Spleen (tissue), 13 donors: ENCODE measurements at regions of chr20 and their contacts with region 1.

Region 1: DNA sequence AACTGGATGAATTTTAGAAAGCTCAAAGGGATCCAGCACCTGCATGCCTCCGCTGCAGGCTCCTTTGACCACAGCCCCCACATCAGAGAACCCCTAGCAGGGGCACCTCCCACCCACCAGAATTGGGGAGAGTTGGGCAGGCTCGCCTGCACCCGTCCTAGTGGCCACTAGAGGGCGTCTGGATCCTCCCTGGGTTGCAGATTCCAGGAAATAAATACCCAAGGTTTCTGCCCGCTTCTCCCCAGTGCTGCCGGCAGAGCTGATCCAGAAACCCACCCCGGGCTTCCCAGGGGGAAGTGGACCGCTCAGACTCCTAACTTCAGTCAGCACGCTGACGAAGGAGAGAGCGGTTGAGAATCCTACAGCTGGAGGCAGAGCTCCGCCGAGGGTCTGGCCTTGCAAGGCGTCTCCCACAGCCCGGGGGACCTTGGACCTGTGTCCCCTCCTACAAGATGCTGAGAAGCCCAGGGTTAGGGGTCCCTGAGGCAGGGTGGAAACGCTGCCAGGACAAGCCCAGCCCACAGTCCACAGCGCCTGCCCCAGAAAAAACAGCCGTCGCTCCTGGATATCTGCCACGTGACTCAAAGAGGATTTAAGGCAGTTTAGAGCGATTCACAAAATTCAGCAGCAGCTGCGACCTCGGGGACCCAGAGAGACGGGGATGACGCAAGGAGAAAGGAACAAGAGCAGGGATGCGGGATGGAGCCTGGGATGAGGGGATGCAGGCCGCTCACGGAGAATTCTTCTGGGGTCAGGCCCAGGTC is 32.6 kb upstream of the PHACTR3 start:
- DNase-seq: peak; percentile 86
- H3K4me3 ChIP-seq: peak overlapping the region in 7 of 8 donors; percentile 1 to 68 (median 27)
- H3K27ac ChIP-seq: peak overlapping the region in 7 of 8 donors; percentile 36 to 78 (median 72)
- H3K4me1 ChIP-seq: peaks cover 0 to 22% (median 12%) of the 10 kb centered on the region in 6 donors
- H3K27me3 ChIP-seq: peaks cover 0 to 63% (median 12%) of the 10 kb centered on the region in 7 donors
- CTCF ChIP-seq: peak; percentile 40 to 93 (median 92)
- POLR2A ChIP-seq: no peak

Region 2: GRCh38 chr20:59455402-59456341 is 116.1 kb before region 1 on chr20:
- intact Hi-C with region 1: no loop called
- DNase-seq: peak; percentile 47
- H3K4me3 ChIP-seq: no peak overlapping the region
- H3K27ac ChIP-seq: no peak overlapping the region
- H3K4me1 ChIP-seq: no peaks in the 10 kb centered on the region
- H3K27me3 ChIP-seq: peaks cover 0 to 30% (median 0%) of the 10 kb centered on the region in 7 donors
- CTCF ChIP-seq: peak in 8 of 11 experiments; percentile 26 to 60 (median 46)
- POLR2A ChIP-seq: no peak

Region 3: GRCh38 chr20:59751056-59751688 is 179.4 kb after region 1 on chr20:
- intact Hi-C with region 1: loop called (anchors 5 kb)
- DNase-seq: peak; percentile 86
- H3K4me3 ChIP-seq: no peak overlapping the region
- H3K27ac ChIP-seq: no peak overlapping the region
- H3K4me1 ChIP-seq: peaks cover 0 to 33% (median 19%) of the 10 kb centered on the region in 6 donors
- H3K27me3 ChIP-seq: peaks cover 0 to 65% (median 0%) of the 10 kb centered on the region in 7 donors
- CTCF ChIP-seq: peak; percentile 13 to 68 (median 52)
- POLR2A ChIP-seq: no peak

Region 4: GRCh38 chr20:59994697-59995122 is 423.0 kb after region 1 on chr20:
- intact Hi-C with region 1: no loop called
- DNase-seq: no peak
- H3K4me3 ChIP-seq: peak overlapping the region in 1 of 8 donors; percentile 33
- H3K27ac ChIP-seq: no peak overlapping the region
- H3K4me1 ChIP-seq: peaks cover 0 to 21% (median 11%) of the 10 kb centered on the region in 6 donors
- H3K27me3 ChIP-seq: no peaks in the 10 kb centered on the region
- CTCF ChIP-seq: no peak
- POLR2A ChIP-seq: no peak